ENCODE measurements at regions of chr2 and their contacts with region 1.

Region 1: GRCh38 chr2:184304006-184304405 is 294.3 kb upstream of the ZNF804A start:
- DNase-seq: no peak
- H3K4me3 ChIP-seq: no peak overlapping the region
- H3K27ac ChIP-seq: no peak overlapping the region
- H3K4me1 ChIP-seq: no peaks in the 10 kb centered on the region
- H3K27me3 ChIP-seq: no peaks in the 10 kb centered on the region
- CTCF ChIP-seq: no peak
- EP300 ChIP-seq: no peak
- POLR2A ChIP-seq: no peak

Region 2: GRCh38 chr2:183838295-183838694 is 465.7 kb before region 1 on chr2:
- in situ Hi-C with region 1: no loop called
- intact Hi-C with region 1: no loop called
- DNase-seq: no peak
- H3K4me3 ChIP-seq: no peak overlapping the region
- H3K27ac ChIP-seq: no peak overlapping the region
- H3K4me1 ChIP-seq: no peaks in the 10 kb centered on the region
- H3K27me3 ChIP-seq: no peaks in the 10 kb centered on the region
- CTCF ChIP-seq: no peak
- EP300 ChIP-seq: no peak
- POLR2A ChIP-seq: no peak

Region 3: GRCh38 chr2:184425083-184425482 is 121.1 kb after region 1 on chr2:
- in situ Hi-C with region 1: no loop called
- intact Hi-C with region 1: no loop called
- DNase-seq: no peak
- H3K4me3 ChIP-seq: no peak overlapping the region
- H3K27ac ChIP-seq: no peak overlapping the region
- H3K4me1 ChIP-seq: no peaks in the 10 kb centered on the region
- H3K27me3 ChIP-seq: no peaks in the 10 kb centered on the region
- CTCF ChIP-seq: no peak
- EP300 ChIP-seq: no peak
- POLR2A ChIP-seq: no peak

Region 4: DNA sequence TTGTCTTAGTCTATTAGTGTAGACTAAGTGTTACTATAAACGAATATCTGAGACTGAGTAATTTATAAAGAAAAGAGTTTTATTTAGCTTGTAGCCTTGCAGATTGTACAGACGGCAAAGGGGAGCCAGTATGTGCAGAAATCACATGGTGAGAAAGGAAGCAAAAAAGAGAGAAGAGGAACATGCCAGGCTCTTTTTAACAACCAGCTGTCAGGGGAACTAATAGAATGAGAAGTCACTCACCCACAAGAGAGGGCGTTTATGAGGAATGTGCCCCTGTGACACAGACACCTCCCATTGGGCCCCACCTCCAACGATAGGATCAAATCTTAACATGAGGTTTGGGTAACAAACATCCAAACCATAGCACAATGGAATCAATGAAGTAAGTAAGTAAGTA is 273.7 kb after region 1 on chr2:
- in situ Hi-C with region 1: no loop called
- intact Hi-C with region 1: loop called (anchors 5 kb)
- DNase-seq: no peak
- H3K4me3 ChIP-seq: no peak overlapping the region
- H3K27ac ChIP-seq: no peak overlapping the region
- H3K4me1 ChIP-seq: no peaks in the 10 kb centered on the region
- H3K27me3 ChIP-seq: no peaks in the 10 kb centered on the region
- CTCF ChIP-seq: no peak
- EP300 ChIP-seq: no peak
- POLR2A ChIP-seq: no peak